Sigmoid colon (tissue), 7 donors: ENCODE measurements at regions of chr6 and their contacts with region 1.

Region 1: DNA sequence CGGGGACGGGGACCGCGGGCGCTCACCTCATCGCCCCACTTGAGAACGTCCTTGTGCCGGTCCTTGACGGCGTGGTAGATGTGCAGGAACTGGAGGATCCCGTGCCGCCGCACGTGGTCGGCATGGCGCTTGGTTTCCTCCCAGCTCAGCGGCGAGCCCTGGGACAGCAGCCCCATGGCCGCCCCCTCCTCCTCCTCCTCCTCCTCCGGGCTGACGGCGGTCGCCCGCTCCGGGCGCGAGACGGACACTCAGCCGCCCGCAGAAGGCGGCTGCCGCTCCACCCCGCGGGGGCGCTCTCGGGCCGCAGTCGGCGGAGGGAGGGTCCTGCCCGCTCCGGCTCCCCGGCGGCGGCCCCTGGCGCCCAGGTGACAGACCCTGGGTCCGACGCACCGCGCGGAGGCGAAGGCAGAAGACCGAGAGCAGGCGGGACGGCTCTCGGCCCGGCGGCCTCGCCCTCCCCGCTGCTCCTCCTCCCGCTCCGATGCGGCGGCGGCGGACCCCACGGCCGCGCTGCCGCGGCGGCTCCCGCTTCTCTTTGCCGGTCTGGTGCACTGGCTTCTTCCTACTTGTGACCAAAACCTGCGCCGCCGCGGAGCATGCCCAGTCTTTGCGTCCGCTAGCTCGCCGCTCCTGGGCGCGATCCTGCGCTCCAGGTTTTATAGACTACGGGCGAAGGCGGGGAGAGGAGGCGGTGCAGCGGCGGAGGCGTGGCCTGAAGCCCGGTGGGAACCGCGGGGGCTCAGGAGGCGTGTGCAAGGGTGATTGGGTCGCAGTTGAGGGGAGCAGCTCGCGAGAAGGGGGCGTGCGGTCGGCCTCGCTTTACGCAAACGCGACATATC is at the start of gene GCLC:
- DNase-seq: peak; percentile 98
- H3K4me3 ChIP-seq: peak within 1 kb of the TSS; percentile 71 to 88 (median 82)
- H3K27ac ChIP-seq: peak within 1 kb of the TSS; percentile 94 to 98 (median 96)
- H3K4me1 ChIP-seq: peaks cover 5 to 61% (median 48%) of the 10 kb centered on the region in 4 donors
- H3K27me3 ChIP-seq: no peaks in the 10 kb centered on the region
- CTCF ChIP-seq: peak; percentile 20 to 73 (median 38)
- EP300 ChIP-seq: peak in 1 of 4 donors; percentile 68
- POLR2A ChIP-seq: peak; percentile 32 to 34
- total RNA-seq, gene GCLC: 53.7 to 60.3 (median 57.4) TPM

Region 2: GRCh38 chr6:52995913-52996645 is 548.6 kb before region 1 on chr6:
- intact Hi-C with region 1: loop called (anchors 5 kb)
- DNase-seq: peak; percentile 67
- H3K4me3 ChIP-seq: peak overlapping the region in 3 of 4 donors; percentile 20 to 65 (median 23)
- H3K27ac ChIP-seq: peak overlapping the region; percentile 89 to 96 (median 92)
- H3K4me1 ChIP-seq: peaks cover 0 to 26% (median 16%) of the 10 kb centered on the region in 4 donors
- H3K27me3 ChIP-seq: no peaks in the 10 kb centered on the region
- CTCF ChIP-seq: no peak
- EP300 ChIP-seq: no peak
- POLR2A ChIP-seq: no peak

Region 3: DNA sequence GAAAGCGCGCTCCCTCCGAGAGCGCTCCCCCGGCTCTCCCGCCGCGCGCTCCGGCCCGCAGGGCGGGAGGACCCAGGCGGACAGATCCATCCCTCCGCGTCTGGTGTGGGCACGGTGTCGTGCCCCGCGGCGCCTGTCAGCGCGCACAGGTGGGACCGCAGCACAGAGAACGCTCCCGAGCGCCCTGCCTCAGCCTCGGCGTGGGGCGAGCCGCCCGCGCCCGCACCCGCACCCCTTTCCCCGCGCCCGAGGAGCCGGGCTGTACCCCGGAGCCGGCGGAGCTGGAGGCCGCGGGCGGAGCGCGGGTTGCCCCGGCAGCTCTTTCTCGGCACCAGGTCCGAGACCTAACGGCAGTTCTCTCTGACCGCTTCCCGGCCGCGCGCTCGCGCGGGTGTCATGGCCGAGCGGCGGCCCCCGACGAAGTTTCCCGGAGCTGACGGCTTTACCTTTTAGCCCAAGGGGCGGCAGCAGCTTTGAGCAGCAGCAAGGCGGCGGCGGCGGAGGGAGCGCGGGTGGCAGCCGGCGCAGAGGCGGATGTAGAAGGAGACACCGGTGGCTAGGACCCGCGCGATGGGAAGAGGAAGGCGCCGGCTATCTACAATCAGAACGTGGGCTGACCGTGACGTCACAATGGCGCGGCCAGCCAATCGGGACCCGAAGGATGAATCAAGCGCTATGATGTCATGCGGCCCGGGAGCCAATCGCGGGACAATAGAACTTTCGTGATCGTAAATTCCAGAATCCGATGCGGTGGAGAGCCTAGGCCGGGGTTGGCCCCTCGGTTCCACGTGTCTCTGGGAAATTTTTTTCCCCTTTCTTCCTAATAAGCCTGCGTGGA is 196.1 kb before region 1 on chr6 and contains the start of gene ELOVL5:
- intact Hi-C with region 1: loop called (anchors 5 kb)
- DNase-seq: peak; percentile 99
- H3K4me3 ChIP-seq: peak within 1 kb of the TSS; percentile 67 to 99 (median 90)
- H3K27ac ChIP-seq: peak within 1 kb of the TSS; percentile 91 to 100 (median 100)
- H3K4me1 ChIP-seq: peaks cover 0 to 30% (median 21%) of the 10 kb centered on the region in 4 donors
- H3K27me3 ChIP-seq: no peaks in the 10 kb centered on the region
- CTCF ChIP-seq: no peak
- EP300 ChIP-seq: peak in 1 of 4 donors; percentile 59
- POLR2A ChIP-seq: peak; percentile 77 to 91
- total RNA-seq, gene ELOVL5: 54.3 to 73.8 (median 70.4) TPM

Region 4: GRCh38 chr6:53492860-53493634 is 51.6 kb before region 1 on chr6:
- intact Hi-C with region 1: loop called (anchors 5 kb)
- DNase-seq: no peak
- H3K4me3 ChIP-seq: peak overlapping the region in 3 of 4 donors; percentile 12 to 20 (median 12)
- H3K27ac ChIP-seq: peak overlapping the region in 2 of 4 donors; percentile 32 to 52
- H3K4me1 ChIP-seq: peaks cover 0 to 39% (median 25%) of the 10 kb centered on the region in 4 donors
- H3K27me3 ChIP-seq: no peaks in the 10 kb centered on the region
- CTCF ChIP-seq: peak; percentile 50 to 72 (median 65)
- EP300 ChIP-seq: no peak
- POLR2A ChIP-seq: no peak

Region 5: DNA sequence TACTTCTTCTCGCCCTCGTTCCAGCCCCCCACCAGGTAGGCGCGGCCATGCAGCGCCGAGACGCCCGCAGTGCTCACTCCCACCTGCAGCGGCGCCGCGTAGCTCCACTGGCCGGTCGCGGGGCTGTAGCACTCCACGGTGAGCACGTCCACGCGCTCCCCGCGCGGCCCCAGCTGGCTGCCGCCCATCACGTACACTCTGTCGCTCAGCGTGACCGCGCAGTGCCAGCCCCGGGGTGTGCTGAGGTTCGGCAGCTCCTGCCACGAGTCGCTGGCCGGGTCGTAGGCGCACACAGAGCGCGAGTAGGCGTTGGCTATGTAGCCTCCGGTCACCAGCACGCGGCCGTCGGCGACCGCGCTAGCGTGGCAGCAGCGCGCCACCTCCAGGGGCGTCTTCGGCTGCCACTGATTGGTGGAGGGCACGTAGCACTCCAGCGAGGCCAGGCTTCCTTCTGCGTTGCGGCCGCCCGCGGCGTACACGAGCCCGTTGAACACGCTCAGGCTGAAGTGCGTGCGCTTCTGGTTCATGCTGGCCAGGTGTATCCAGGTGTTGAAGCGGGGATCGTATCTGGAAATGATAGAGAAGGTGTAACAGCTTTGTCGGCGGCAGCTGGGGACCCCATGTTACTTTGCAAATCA is 107.2 kb after region 1 on chr6:
- intact Hi-C with region 1: loop called (anchors 1 kb)
- DNase-seq: peak; percentile 82
- H3K4me3 ChIP-seq: peak overlapping the region; percentile 42 to 65 (median 57)
- H3K27ac ChIP-seq: peak overlapping the region in 3 of 4 donors; percentile 15 to 56 (median 41)
- H3K4me1 ChIP-seq: peaks cover 0 to 20% (median 8%) of the 10 kb centered on the region in 4 donors
- H3K27me3 ChIP-seq: no peaks in the 10 kb centered on the region
- CTCF ChIP-seq: peak in 2 of 4 experiments; percentile 14 to 22
- EP300 ChIP-seq: no peak
- POLR2A ChIP-seq: no peak

Region 6: GRCh38 chr6:53725791-53726431 is 181.2 kb after region 1 on chr6:
- intact Hi-C with region 1: loop called (anchors 5 kb)
- DNase-seq: peak; percentile 86
- H3K4me3 ChIP-seq: no peak overlapping the region
- H3K27ac ChIP-seq: no peak overlapping the region
- H3K4me1 ChIP-seq: peaks cover 0 to 3% (median 0%) of the 10 kb centered on the region in 4 donors
- H3K27me3 ChIP-seq: no peaks in the 10 kb centered on the region
- CTCF ChIP-seq: peak; percentile 69 to 95 (median 84)
- EP300 ChIP-seq: no peak
- POLR2A ChIP-seq: no peak

Region 7: DNA sequence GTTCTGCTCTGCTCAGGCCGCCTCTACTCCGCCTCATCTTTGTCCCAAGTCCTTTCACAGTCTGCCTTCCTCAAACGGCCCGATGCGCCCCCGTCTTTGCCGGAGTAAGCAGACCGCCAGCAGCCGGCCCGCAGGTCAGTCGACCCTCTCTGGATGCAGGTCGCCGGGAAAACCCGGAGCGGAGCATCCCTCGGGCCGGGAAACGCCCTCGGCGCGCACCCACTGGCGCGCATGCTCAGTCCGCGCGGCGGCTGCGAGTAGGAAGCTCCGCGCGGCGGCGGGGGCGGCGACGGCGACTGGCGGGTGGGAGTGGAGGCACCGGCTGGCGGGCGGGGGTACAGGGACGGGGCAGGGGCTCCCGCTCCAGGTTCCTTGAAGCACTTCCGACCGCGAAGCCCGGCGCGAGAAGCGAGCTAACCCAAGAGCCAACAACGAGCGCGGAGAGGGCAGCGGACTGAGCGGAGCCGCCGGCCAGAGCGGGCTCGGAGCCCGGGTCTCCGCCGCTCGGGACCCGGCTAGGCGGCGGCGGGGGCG is 250.1 kb after region 1 on chr6 and contains the start of gene LRRC1:
- intact Hi-C with region 1: loop called (anchors 2 kb)
- DNase-seq: peak; percentile 95
- H3K4me3 ChIP-seq: peak within 1 kb of the TSS; percentile 69 to 95 (median 84)
- H3K27ac ChIP-seq: peak within 1 kb of the TSS; percentile 81 to 90 (median 84)
- H3K4me1 ChIP-seq: peaks cover 0 to 37% (median 21%) of the 10 kb centered on the region in 4 donors
- H3K27me3 ChIP-seq: peaks cover 0 to 5% (median 0%) of the 10 kb centered on the region in 3 donors
- CTCF ChIP-seq: no peak
- EP300 ChIP-seq: no peak
- POLR2A ChIP-seq: peak; percentile 24 to 36
- total RNA-seq, gene LRRC1: 20.8 to 32.4 (median 24.4) TPM